ENCODE measurements at regions of chr1 and their contacts with region 1.

Region 1: GRCh38 chr1:45686317-45687013 is at the start of gene GPBP1L1:
- DNase-seq: peak; percentile 86
- H3K4me3 ChIP-seq: peak within 1 kb of the TSS; percentile 72 to 100 (median 100)
- H3K27ac ChIP-seq: peak within 1 kb of the TSS; percentile 99
- H3K4me1 ChIP-seq: peaks cover 18% of the 10 kb centered on the region
- H3K27me3 ChIP-seq: no peaks in the 10 kb centered on the region
- CTCF ChIP-seq: no peak
- polyA plus RNA-seq, gene GPBP1L1: 43.4 to 65.5 TPM (median 64.1 TPM) in 3 replicates

Region 2: GRCh38 chr1:45617618-45618017 is 68.8 kb before region 1 on chr1:
- dilution Hi-C with region 1: no loop called
- DNase-seq: no peak
- H3K4me3 ChIP-seq: no peak overlapping the region
- H3K27ac ChIP-seq: no peak overlapping the region
- H3K4me1 ChIP-seq: peaks cover 15% of the 10 kb centered on the region
- H3K27me3 ChIP-seq: no peaks in the 10 kb centered on the region
- CTCF ChIP-seq: no peak

Region 3: DNA sequence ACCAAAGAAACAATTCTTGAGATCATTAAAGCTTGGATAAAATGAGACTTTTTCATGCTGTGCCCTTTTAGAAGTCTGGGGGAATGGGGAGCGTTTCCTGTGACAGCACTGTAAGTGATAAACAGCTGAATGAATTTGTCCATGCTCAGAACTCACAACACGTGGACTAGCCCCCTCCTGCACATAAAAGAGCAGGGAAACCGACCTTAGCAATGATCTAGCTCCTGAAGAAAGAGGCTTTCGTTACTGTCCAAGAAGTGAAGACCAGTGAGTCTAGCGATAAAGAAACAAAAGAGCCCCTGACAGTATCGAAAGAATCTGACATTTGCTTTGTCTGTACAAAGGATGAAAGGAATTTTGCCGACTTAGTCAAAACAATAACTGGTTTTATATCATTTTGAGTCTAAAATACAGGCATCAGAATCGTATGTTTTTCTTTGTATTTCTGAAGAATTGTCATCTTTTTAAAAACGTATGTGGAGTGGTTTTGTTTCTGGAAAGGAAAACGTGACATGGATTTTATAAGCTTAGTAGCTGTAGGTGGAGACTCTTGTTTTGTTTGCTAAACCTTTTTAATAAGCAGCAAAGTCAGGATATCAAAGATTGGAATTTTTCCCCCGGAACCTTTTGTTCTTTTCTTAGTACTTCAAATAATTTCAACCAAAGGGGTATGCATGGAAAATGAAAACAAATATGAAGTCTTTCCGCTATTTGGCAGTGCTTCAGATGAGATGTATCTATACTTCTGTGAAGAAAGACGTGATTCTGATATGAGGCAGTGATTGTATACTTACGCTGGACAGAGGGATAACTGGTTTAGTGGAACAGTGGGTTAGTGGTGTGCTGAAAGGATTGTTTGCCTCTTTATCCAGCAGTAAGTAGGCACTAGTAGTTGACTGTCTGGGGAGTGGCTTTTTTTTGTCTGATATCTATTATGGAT is 178.0 kb after region 1 on chr1:
- dilution Hi-C with region 1: loop called (anchors 25 kb)
- DNase-seq: no peak
- H3K4me3 ChIP-seq: no peak overlapping the region
- H3K27ac ChIP-seq: no peak overlapping the region
- H3K4me1 ChIP-seq: no peaks in the 10 kb centered on the region
- H3K27me3 ChIP-seq: no peaks in the 10 kb centered on the region
- CTCF ChIP-seq: no peak